ENCODE measurements at regions of chr4 and their contacts with region 1.

Region 1: DNA sequence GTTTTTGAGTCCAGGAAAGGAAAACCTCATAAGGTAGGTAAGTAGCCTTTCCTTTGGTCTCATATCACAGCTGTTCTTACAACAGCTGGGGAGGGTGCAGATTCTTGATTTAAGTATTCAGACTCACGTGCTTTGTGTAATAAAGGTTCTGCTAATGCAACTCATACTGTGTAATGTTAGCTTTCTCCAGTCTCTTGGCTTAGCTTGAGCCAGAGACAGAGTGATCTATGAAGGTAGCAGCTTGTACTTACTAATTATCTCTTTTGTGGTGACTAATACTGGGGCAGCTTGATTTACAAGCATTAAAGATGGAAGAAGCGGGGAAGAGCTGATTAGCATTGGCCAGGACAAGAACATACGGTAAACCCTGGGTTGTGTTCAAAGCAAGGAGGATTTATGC is 80.3 kb downstream of the LNX1 start:
- DNase-seq: no peak
- CTCF ChIP-seq: no peak

Region 2: DNA sequence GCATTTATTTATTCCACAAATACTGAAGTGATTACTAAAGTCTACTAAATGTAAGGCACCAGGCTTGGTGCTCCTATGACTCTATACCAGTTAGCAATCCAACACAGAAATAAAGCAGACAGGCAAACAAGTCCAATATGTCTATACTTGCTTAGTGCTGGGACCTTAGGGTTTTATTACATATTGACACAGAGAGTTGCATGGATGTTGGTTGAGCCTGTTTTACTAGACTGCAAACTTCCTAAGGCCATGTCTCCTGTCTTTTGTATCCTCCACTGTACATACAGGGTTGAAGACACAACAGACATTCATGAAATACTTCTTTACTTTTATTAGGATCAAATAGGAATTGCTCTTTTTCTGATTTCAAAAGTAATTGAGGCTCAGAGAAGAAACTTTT is 11.3 kb after region 1 on chr4:
- CTCF ChIA-PET with region 1: interaction called, 14 read pairs
- POLR2A ChIA-PET with region 1: no interaction called
- DNase-seq: no peak
- CTCF ChIP-seq: no peak

Measured in GM10248 (cell line).